ENCODE measurements at regions of chr5 and their contacts with region 1.

Region 1: DNA sequence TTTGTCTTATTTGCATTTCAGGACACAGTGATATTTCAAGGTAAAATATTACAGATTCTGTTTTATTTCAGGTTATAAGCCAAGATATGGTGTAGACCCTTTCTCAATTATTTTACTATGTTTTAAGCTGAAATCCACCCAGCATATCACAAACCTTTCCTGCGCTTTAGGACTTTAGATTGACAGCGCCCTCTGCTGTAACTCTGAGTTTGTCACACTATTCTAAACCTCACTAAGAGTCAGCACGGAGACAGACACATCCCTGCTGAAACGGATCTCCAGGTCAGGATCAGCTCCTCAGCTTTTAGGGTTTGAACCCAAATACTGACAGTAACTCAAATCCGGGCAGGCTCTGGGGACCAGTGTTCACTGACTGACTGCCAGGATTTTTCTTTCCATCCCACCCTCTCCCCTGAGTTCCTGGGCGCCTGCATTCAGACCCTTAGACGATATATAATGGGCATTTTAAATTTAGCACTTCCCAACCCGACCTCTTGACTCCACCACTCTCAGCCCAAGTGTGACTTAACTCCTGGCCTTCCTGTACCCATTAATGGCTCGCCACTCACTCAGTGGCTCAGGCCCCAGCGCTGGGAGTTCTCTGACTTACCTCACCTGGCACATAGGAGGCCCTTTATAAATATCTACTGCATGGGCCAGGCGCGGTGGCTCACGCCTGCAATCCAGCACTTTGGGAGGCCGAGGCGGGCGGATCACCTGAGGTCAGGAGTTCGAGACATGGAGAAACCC is 33.5 kb downstream of the TLX3 start:
- DNase-seq: peak in 3 of 6 donors; percentile 17 to 42 (median 33)
- ATAC-seq: peak; percentile 48 to 88 (median 83)
- H3K4me3 ChIP-seq: no peak overlapping the region
- H3K27ac ChIP-seq: no peak overlapping the region
- H3K4me1 ChIP-seq: no peaks in the 10 kb centered on the region
- H3K27me3 ChIP-seq: peaks cover 0 to 7% (median 3%) of the 10 kb centered on the region in 4 donors
- CTCF ChIP-seq: peak in 3 of 4 donors; percentile 18 to 36 (median 26)

Region 2: DNA sequence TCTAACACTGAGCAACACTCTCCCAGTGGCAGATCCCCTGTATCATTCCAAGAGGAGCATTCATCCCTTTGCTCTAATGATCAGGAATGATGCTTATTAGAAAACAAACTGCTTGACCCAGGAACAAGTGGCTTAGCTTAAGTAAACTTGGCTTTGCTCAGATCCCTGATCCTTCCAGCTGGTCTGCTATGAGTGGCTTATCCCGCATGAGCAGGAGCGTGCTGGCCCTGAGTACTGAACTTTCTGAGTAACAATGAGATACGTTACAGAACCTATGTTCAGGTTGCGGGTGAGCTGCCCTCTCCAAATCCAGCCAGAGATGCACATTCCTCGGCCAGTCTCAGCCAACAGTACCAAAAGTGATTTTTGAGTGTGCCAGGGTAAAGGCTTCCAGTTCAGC is 529.3 kb before region 1 on chr5:
- intact Hi-C with region 1: loop called in 1 of 3 experiments (anchors 5 kb)
- DNase-seq: no peak
- ATAC-seq: no peak
- H3K4me3 ChIP-seq: no peak overlapping the region
- H3K27ac ChIP-seq: no peak overlapping the region
- H3K4me1 ChIP-seq: no peaks in the 10 kb centered on the region
- H3K27me3 ChIP-seq: peaks cover 0 to 5% (median 0%) of the 10 kb centered on the region in 4 donors
- CTCF ChIP-seq: no peak

Region 3: DNA sequence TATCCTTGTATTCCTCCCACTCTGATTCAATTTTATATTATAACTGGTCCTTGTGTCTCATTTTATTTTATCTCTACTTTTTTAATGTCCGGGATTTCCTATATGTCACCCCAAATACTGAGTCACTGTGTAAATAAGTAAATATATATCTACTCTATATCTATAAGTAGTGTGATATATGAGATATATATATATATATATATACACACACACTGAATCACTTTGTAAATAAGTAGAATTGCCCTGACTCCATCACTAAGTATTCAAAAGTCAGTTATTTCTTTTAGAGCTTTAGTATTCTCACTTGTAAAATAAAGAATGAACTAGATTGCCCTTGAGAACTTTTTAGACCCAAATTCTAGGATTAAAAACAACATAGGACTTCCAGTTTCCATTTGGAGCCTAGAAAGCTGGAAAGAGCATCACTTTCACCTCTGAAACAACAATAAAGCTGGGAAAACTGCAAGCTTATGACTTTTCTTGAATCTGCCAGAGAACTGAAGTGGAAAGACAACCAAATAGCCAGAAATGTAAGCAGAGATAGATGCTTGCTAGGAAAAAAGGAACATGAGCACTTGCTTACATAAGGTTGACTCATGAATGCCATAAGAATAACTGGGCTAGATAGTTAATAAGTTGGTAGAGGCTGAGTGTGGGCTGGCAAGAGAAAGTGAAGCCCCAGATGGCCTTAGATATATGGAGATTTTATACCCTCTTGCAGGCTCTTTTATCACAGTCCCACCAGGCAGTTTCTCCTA is 204.6 kb before region 1 on chr5:
- intact Hi-C with region 1: no loop called
- DNase-seq: no peak
- ATAC-seq: peak in 1 of 4 donors; percentile 30
- H3K4me3 ChIP-seq: no peak overlapping the region
- H3K27ac ChIP-seq: no peak overlapping the region
- H3K4me1 ChIP-seq: no peaks in the 10 kb centered on the region
- H3K27me3 ChIP-seq: no peaks in the 10 kb centered on the region
- CTCF ChIP-seq: no peak

Region 4: GRCh38 chr5:171437286-171437821 is 94.8 kb after region 1 on chr5:
- intact Hi-C with region 1: no loop called
- DNase-seq: peak; percentile 82 to 95 (median 91)
- ATAC-seq: peak; percentile 86 to 92 (median 90)
- H3K4me3 ChIP-seq: no peak overlapping the region
- H3K27ac ChIP-seq: peak overlapping the region; percentile 76 to 86 (median 84)
- H3K4me1 ChIP-seq: peaks cover 10 to 15% (median 11%) of the 10 kb centered on the region in 3 donors
- H3K27me3 ChIP-seq: no peaks in the 10 kb centered on the region
- CTCF ChIP-seq: no peak

Region 5: GRCh38 chr5:171681677-171682076 is 339.1 kb after region 1 on chr5:
- intact Hi-C with region 1: no loop called
- DNase-seq: no peak
- ATAC-seq: peak in 2 of 4 donors; percentile 11 to 16
- H3K4me3 ChIP-seq: no peak overlapping the region
- H3K27ac ChIP-seq: no peak overlapping the region
- H3K4me1 ChIP-seq: no peaks in the 10 kb centered on the region
- H3K27me3 ChIP-seq: no peaks in the 10 kb centered on the region
- CTCF ChIP-seq: no peak